Endothelial cell of umbilical vein (primary cell): ENCODE measurements at regions of chr10 and their contacts with region 1.

Region 1: DNA sequence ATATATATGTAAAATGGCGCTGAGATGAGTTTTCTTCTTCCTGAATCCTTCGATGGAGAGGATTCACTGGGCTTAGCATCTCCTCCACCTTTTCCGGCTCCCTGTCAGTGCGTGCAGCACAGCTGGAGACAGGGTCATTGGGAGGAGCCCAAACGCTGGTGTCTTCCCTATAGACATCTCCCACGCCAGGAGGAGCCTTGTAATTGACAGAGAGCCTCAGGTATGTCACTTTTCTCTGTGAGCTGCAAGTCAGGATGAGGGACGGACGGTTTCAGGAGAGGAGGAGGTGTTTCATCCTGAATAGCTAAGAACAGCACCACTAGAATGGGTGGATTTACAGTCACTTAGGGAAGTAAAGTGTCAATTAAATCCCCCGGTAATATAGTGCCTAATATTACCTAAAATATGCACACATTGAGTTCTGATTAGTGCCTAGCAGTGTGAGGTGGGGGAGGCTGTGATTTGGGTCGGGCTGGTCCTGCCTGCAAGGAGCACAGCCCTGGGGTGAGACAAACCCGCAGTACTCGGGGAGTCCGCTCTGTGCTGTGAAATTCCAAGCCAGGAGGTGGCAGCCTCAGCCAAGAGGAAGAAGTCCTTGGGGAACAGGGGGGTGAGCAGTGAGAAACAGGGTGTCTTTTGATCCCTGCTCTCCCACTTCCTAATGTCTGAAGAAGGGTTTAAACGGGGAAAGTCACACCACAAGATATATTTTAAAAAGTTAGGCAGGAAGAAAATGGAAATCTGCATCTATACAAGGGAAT is 28.2 kb downstream of the IL15RA start:
- DNase-seq: peak; percentile 82
- H3K4me3 ChIP-seq: no peak overlapping the region
- H3K27ac ChIP-seq: no peak overlapping the region
- H3K4me1 ChIP-seq: peaks cover 32% of the 10 kb centered on the region
- H3K27me3 ChIP-seq: no peaks in the 10 kb centered on the region
- CTCF ChIP-seq: peak; percentile 45 to 66
- POLR2A ChIP-seq: no peak

Region 2: GRCh38 chr10:5813287-5814109 is 135.7 kb before region 1 on chr10 and contains the start of gene GDI2:
- CTCF ChIA-PET with region 1: no interaction called
- POLR2A ChIA-PET with region 1: interaction called, 5 read pairs
- dilution Hi-C with region 1: no loop called
- intact Hi-C with region 1: loop called (anchors 1 kb)
- DNase-seq: peak; percentile 96
- H3K4me3 ChIP-seq: peak within 1 kb of the TSS; percentile 91 to 100 (median 97)
- H3K27ac ChIP-seq: peak within 1 kb of the TSS; percentile 92
- H3K4me1 ChIP-seq: peaks cover 35% of the 10 kb centered on the region
- H3K27me3 ChIP-seq: no peaks in the 10 kb centered on the region
- CTCF ChIP-seq: no peak
- POLR2A ChIP-seq: peak; percentile 96
- total RNA-seq, gene GDI2: 266 and 307 TPM in 2 replicates

Region 3: DNA sequence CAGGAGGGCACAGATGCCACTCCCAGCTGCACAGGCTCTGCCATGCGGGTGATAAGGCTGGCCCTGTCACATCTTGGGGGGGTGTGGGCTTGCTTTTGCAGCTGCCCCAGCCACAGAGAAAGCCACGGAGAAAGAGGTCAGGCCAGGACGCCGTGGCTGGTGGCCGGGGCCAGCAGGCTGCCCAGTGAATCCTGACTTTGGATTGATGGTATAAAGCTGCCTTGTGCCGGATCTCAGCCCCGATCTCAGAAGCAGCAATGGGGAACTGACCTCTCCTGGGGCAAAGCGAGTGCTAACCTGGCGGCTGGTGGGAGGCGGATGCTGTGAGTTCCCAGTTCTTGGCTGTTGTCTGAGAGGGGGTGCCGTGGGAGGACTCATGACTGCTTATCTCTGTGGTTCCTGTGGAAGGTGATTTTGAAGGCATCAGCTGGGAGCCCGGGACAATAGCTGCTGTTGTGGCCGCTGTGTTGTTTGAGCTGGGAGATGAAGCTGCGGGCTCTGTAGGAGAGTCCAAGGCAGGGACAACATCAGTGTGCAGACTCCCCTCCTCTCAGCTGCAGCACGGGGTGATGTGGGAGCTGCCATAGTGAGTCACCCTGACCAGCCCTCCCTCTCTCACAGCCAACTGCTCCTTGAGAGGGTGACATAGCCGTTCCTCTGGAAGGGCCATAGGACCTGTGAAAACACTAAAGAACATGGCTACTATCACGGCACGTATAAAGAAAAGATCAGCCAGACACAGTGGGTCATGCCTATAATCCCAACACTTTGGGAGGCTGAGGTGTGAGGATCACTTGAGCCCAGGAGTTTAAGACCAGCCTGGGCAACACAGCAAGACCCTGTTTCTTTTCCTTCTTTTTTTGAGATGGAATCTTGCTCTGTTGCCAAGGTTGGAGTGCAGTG is 11.1 kb after region 1 on chr10:
- CTCF ChIA-PET with region 1: interaction called, 3 read pairs
- POLR2A ChIA-PET with region 1: no interaction called
- dilution Hi-C with region 1: no loop called
- intact Hi-C with region 1: loop called (anchors 1 kb)
- DNase-seq: no peak
- H3K4me3 ChIP-seq: no peak overlapping the region
- H3K27ac ChIP-seq: no peak overlapping the region
- H3K4me1 ChIP-seq: peaks cover 12% of the 10 kb centered on the region
- H3K27me3 ChIP-seq: no peaks in the 10 kb centered on the region
- CTCF ChIP-seq: no peak
- POLR2A ChIP-seq: no peak

Region 4: DNA sequence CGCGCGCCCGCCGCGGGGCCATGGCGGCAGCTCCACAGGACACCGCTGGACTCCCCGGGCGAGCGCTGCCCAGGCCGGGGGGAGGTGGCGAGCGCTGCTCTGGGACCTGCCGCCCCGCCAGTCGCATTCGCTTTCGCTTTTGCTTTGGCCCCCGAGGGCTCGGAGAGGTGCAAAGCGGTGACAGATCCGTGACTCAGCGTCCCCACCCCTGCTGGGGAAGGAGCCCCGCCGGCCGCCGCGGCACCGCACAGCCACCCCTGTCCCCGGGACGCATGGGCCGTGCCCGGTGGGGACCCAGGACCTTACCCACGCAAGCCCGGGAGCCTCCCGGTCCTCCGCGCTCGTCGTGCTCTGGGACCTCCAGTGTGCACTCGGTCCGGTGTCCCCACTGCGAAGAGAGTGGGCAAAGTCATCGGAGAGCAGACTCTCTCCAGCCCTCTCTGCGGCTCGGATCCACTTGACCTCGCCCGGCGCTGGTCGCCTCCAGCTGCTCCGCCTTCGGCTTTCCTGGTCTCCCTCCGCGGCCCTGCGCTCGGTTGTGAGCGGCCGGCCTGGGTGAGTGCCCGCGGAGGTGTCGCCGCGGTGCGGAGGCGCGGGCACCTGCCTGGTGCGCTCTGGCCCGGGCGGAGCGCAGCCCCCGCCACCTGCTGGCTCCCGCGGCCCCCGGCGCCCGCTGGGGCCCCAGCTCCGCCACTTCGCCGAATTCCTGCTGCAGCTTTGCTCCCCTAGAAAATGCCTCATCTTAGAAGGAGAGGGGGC is 28.5 kb after region 1 on chr10 and contains the start of gene IL15RA:
- CTCF ChIA-PET with region 1: interaction called, 6 read pairs
- POLR2A ChIA-PET with region 1: no interaction called
- dilution Hi-C with region 1: no loop called
- intact Hi-C with region 1: loop called (anchors 1 kb)
- DNase-seq: peak; percentile 82
- H3K4me3 ChIP-seq: peak within 1 kb of the TSS; percentile 10 to 98 (median 47)
- H3K27ac ChIP-seq: peak within 1 kb of the TSS; percentile 60
- H3K4me1 ChIP-seq: peaks cover 14% of the 10 kb centered on the region
- H3K27me3 ChIP-seq: peaks cover 0 to 2% of the 10 kb centered on the region in 2 experiments
- CTCF ChIP-seq: peak; percentile 6 to 13
- POLR2A ChIP-seq: no peak
- total RNA-seq, gene IL15RA: 16.1 and 18.8 TPM in 2 replicates

Region 5: GRCh38 chr10:6151087-6151977 is 202.2 kb after region 1 on chr10:
- CTCF ChIA-PET with region 1: no interaction called
- POLR2A ChIA-PET with region 1: no interaction called
- dilution Hi-C with region 1: no loop called
- intact Hi-C with region 1: loop called (anchors 5 kb)
- DNase-seq: peak; percentile 83
- H3K4me3 ChIP-seq: peak overlapping the region in 1 of 3 experiments; percentile 16
- H3K27ac ChIP-seq: peak overlapping the region; percentile 25
- H3K4me1 ChIP-seq: peaks cover 9% of the 10 kb centered on the region
- H3K27me3 ChIP-seq: no peaks in the 10 kb centered on the region
- CTCF ChIP-seq: peak; percentile 72 to 78
- POLR2A ChIP-seq: no peak